Adrenal gland (tissue), 19 donors: ENCODE measurements at regions of chr1 and their contacts with region 1.

Region 1: DNA sequence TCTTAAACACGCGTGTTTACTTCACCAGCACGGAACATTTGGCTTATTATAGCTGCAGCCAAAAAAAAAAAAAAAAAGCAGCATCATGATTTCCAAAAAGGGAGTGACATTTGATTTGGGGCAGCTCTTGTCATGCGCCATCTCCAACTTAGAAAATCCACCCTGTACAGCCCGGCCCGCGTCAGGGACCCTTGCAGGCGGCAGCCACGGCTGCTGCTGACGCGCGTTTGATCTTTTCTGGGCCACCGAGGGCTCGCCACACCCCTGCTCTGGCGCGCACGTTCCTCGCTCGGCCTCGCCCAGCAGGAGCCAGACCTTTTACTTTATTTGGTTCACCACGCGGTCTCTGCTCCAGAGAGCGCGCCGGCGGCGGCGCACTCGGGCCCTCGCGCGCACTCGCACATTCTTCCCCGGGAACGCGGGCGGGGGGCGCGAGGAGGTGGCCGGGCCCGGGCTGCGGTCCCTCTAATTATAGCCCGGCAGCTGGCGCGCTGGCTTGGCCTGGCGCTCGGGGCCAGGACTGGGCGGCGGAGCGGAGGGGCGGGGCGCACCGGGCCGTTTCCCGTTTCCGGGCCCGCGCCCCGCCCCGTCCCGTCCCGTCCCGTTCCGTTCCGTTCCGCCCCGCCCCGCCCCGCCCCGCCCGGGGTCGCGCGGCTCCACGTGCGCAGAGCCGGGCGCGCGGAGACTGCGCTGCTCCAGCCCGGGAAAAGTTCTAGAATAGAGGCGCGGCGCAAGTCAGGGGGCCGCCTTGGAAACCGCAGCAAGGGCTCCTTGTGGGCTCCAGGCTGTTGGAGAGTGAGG is 10.2 kb downstream of the IRF2BP2 start:
- DNase-seq: peak; percentile 80 to 91 (median 87)
- H3K4me3 ChIP-seq: peak overlapping the region in 3 of 4 donors; percentile 19 to 61 (median 31)
- H3K27ac ChIP-seq: peak overlapping the region; percentile 97 to 100 (median 100)
- H3K4me1 ChIP-seq: peaks cover 49 to 55% of the 10 kb centered on the region in 2 donors
- H3K27me3 ChIP-seq: no peaks in the 10 kb centered on the region
- CTCF ChIP-seq: peak in 2 of 6 experiments; percentile 2 to 5
- POLR2A ChIP-seq: peak; percentile 45 to 85

Region 2: DNA sequence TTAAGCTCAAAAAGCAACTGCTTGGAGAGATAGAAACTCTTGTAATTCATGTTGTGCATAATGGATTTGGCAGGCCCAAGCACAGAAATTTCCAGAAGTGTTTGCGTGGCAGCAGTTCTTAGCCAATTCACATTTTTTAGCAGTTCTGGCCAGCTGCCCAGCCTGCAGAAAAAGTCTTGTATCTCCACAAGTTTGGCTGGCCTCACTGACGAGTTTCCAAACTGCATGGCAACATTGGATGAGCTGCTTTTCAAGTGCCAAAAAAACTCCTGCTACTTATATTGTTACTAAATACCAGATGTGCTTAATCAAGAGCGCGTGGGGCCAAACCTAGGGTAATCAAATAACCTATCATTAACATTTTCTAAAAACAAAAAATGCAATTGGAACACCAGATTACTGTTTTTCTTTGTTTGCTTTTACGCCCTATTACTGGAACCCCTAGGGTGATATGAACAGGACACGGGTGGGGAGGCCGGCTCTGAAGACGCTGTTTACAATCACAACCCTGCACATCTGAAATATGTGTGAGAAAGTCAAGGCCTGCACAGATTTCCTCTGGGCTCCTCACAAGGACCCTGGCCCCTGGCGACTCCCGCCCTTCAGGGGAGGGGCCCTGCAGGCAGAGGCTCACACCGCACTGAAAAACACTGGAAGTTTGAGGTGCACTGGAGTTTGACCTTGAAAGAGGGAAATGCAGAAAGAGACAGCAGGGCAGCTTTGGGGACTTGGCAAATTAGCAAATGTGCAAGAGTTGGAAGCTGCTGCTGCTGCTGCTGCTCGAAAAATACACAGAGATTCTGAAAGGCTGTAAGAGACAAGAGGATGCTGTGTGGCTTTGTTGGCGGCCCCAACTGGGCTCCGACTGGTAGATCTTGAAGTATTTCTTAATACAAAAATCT is 65.6 kb before region 1 on chr1:
- intact Hi-C with region 1: loop called in 1 of 2 experiments (anchors 10 kb)
- DNase-seq: peak; percentile 94 to 98 (median 98)
- H3K4me3 ChIP-seq: no peak overlapping the region
- H3K27ac ChIP-seq: peak overlapping the region; percentile 82 to 94 (median 87)
- H3K4me1 ChIP-seq: peaks cover 43 to 74% of the 10 kb centered on the region in 2 donors
- H3K27me3 ChIP-seq: no peaks in the 10 kb centered on the region
- CTCF ChIP-seq: no peak
- POLR2A ChIP-seq: no peak

Region 3: GRCh38 chr1:234978397-234979295 is 378.8 kb after region 1 on chr1:
- intact Hi-C with region 1: loop called in 1 of 2 experiments (anchors 10 kb)
- DNase-seq: peak; percentile 73 to 91 (median 86)
- H3K4me3 ChIP-seq: peak overlapping the region in 1 of 4 donors; percentile 7
- H3K27ac ChIP-seq: peak overlapping the region; percentile 94 to 99 (median 95)
- H3K4me1 ChIP-seq: peaks cover 61 to 82% of the 10 kb centered on the region in 2 donors
- H3K27me3 ChIP-seq: no peaks in the 10 kb centered on the region
- CTCF ChIP-seq: peak in 1 of 6 experiments; percentile 21
- POLR2A ChIP-seq: peak in 1 of 2 donors; percentile 67

Region 4: DNA sequence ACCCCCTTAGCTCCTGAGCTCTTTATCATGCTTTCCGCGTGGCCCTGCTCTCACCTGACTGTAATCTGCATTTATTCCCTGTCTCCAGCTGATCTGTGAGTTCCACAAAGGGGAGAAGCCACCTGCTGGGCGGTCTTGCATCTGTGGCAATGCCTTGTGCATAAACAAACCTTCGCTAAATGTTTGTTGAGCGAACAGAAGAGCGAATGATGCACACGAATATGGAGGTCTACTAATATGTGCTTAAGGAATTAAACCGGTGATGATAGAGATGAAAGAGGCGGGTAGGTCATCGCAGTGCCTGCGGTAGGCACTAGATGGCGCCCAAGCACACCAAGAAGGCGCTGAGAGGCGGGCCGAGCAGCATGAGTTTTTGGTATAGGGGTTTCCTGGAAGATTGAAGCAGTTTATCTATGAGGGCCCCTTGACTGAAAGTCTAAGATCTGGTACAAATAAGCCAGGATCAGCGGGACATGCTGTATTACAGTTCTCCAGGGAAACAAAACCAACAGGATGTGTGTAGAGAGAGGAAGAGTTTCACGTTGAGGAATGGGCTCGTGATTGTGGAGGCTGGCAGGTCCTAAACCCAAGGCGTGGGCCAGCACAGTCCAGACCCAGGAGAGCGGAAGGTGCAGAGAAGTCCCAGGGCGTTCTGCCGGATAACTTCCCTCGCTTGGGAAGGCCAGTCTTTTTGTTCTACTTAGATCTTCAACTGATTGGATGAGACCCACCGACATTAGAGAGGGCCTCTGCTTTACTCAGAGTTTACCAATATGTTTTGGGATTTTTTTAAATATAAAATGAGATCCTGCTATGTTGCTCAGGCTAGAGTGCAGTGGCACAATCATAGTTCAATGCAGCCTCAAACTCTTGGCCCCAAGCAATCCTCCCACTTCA is 494.1 kb after region 1 on chr1:
- intact Hi-C with region 1: loop called in 1 of 2 experiments (anchors 5 kb)
- DNase-seq: peak; percentile 59 to 93 (median 80)
- H3K4me3 ChIP-seq: peak overlapping the region in 1 of 4 donors; percentile 7
- H3K27ac ChIP-seq: peak overlapping the region in 2 of 5 donors; percentile 8 to 10
- H3K4me1 ChIP-seq: peaks cover 0 to 10% of the 10 kb centered on the region in 2 donors
- H3K27me3 ChIP-seq: no peaks in the 10 kb centered on the region
- CTCF ChIP-seq: peak; percentile 75 to 90 (median 80)
- POLR2A ChIP-seq: no peak